ENCODE measurements at regions of chr11 and their contacts with region 1.

Region 1: GRCh38 chr11:124987096-124987495 is 33.1 kb downstream of the CCDC15 start:
- DNase-seq: no peak
- ATAC-seq: no peak
- H3K4me3 ChIP-seq: no peak overlapping the region
- H3K27ac ChIP-seq: no peak overlapping the region
- H3K4me1 ChIP-seq: no peaks in the 10 kb centered on the region
- H3K27me3 ChIP-seq: no peaks in the 10 kb centered on the region
- CTCF ChIP-seq: no peak

Region 2: DNA sequence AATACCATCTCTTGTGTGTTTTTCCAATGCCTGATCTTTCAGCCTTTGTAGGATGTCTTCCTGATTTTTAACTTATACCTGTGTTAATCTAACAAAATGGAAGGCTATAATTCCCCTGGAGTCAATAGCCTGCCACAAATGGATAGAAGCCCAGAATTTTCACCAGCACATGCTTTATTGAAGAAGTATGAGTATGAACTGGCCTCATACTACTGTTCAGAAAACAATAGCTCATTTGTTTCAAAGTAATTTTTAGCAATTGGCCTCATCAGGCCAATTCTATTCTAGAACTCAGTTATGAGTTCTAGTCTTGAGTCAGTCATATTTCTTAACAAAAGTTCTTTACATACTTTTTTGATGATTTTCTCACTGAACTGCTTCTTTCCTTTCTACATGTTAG is 35.5 kb after region 1 on chr11:
- CTCF ChIA-PET with region 1: no interaction called
- POLR2A ChIA-PET with region 1: no interaction called
- intact Hi-C with region 1: loop called (anchors 5 kb)
- DNase-seq: no peak
- ATAC-seq: peak; percentile 25; the same call in 1 of the 2 replicates
- H3K4me3 ChIP-seq: no peak overlapping the region
- H3K27ac ChIP-seq: no peak overlapping the region
- H3K4me1 ChIP-seq: peaks cover 11% of the 10 kb centered on the region
- H3K27me3 ChIP-seq: no peaks in the 10 kb centered on the region
- CTCF ChIP-seq: no peak

Measured in PC-3 (cell line).